ENCODE measurements at regions of chr10 and their contacts with region 1.

Region 1: DNA sequence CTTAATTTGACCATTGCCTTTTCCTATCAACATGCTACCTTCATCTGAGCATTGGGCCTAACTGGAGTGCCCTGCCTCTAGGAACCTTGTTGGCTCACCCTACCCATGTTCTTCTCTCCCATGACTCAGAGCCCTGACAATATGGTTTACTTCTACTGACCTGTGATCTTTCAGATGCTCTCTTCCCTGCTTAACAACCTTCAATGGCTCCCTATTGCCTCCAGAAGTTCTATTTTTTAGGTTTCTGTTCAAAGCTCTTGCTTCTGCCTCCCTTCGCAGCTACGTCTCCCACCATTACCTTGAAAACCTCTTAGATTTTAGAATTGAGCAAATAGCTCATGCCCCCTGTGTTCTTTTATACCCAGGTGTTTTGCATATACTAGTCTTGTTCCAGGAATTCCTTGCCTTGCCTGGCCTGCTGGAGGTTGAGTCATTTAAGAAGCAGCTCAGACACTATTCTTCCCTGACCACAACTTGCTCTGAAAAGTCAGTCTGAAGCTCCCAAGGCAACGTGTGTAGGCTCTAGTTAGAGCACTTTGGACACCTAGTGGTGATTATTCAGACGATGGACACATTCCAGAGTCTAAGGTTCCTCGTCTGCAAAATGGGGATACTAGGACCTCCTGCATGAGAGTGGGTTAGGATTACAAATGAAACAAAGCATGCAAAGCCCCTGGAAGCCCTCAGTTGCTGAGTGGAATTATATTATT is 64.4 kb upstream of the EMX2 start:
- DNase-seq: no peak
- H3K4me3 Mint-ChIP-seq: no peak overlapping the region
- H3K27ac Mint-ChIP-seq: peak overlapping the region; percentile 21
- H3K4me1 Mint-ChIP-seq: no peaks in the 10 kb centered on the region
- H3K27me3 Mint-ChIP-seq: peaks cover 32% of the 10 kb centered on the region
- CTCF ChIP-seq: no peak

Region 2: DNA sequence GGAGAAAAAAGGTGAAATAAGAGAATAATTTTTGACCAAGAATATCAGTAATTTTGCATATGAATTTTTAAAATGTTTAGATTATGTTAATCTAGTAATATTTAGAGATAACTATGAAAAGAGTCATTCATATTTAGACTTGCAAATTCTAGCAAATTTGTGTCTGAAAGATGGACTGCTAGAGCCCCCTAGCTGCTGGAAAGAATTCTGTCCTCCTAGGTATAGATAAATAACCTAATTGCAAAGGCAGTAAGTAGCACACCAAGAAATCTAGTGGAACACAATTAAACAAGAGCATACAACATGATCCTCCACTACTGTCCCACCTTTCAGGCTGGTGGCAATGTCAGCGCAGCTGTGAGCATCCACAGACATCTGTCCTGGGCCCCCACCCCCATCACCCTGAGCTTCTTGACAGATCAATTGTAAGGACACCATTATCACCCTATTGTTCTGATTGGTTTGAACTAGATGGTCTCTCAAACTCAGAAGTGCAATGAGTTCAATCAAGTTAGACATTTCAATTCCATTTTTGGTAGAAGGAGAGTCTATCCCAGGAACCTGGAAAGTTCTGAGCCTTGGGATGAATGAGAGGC is 1190.1 kb before region 1 on chr10:
- CTCF ChIA-PET with region 1: no interaction called
- intact Hi-C with region 1: no loop called
- DNase-seq: peak; percentile 23
- H3K4me3 Mint-ChIP-seq: no peak overlapping the region
- H3K27ac Mint-ChIP-seq: no peak overlapping the region
- H3K4me1 Mint-ChIP-seq: no peaks in the 10 kb centered on the region
- H3K27me3 Mint-ChIP-seq: peaks cover 45% of the 10 kb centered on the region
- CTCF ChIP-seq: no peak

Region 3: GRCh38 chr10:117216611-117217195 is 261.4 kb before region 1 on chr10:
- CTCF ChIA-PET with region 1: interaction called, 9 read pairs
- intact Hi-C with region 1: loop called (anchors 5 kb)
- DNase-seq: peak; percentile 75
- H3K4me3 Mint-ChIP-seq: peak overlapping the region; percentile 73
- H3K27ac Mint-ChIP-seq: no peak overlapping the region
- H3K4me1 Mint-ChIP-seq: peaks cover 9% of the 10 kb centered on the region
- H3K27me3 Mint-ChIP-seq: peaks cover 41% of the 10 kb centered on the region
- CTCF ChIP-seq: peak; percentile 99

Region 4: DNA sequence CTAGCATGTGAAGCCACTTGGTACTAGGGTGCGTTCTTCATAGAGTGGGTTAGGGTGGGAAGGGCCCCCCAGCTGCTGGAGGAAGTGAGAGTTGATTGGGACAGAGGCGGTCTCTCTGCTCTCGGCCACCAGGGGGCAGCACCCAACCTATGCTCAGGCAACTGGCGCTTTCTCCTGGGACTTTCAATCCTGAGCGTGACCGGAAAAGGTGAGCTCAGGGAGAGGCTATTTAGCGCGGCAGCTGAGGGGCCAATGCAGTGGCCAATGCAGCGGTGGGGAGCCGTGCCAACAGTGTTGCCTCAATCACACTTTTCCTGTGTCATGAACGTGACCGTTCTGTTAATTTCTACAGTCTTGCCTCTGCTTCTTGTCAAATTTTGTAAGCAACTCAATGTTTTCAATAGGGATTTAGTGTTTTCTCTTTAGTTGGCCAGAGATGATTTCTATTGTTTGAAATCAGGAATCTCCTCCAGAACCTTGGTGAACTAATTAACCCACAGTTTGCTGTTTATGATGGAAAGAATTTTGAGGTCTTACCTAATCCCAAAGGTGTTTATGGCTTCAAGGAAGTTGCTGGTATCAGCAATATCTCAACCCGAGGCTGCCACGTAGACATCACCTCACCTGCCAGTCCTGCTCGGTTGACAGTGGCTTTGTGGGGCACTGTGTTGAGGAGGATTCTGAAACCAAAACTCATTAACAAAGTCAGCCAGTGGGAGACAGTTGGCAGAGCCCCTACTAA is 35.0 kb before region 1 on chr10:
- CTCF ChIA-PET with region 1: interaction called, 7 read pairs
- intact Hi-C with region 1: loop called (anchors 1 kb)
- DNase-seq: peak; percentile 80
- H3K4me3 Mint-ChIP-seq: peak overlapping the region; percentile 39
- H3K27ac Mint-ChIP-seq: no peak overlapping the region
- H3K4me1 Mint-ChIP-seq: no peaks in the 10 kb centered on the region
- H3K27me3 Mint-ChIP-seq: peaks cover 22% of the 10 kb centered on the region
- CTCF ChIP-seq: peak; percentile 76